ENCODE measurements at regions of chr1 and their contacts with region 1.

Region 1: GRCh38 chr1:217911908-217912307 is 280.8 kb downstream of the SPATA17 start:
- DNase-seq: no peak
- ATAC-seq: no peak
- H3K4me3 ChIP-seq: no peak overlapping the region
- H3K27ac ChIP-seq: no peak overlapping the region
- H3K4me1 ChIP-seq: no peaks in the 10 kb centered on the region
- H3K27me3 ChIP-seq: peaks cover 0 to 5% (median 0%) of the 10 kb centered on the region in 7 donors
- CTCF ChIP-seq: no peak

Region 2: GRCh38 chr1:217703326-217703725 is 208.6 kb before region 1 on chr1:
- intact Hi-C with region 1: no loop called
- DNase-seq: no peak
- ATAC-seq: no peak
- H3K4me3 ChIP-seq: no peak overlapping the region
- H3K27ac ChIP-seq: no peak overlapping the region
- H3K4me1 ChIP-seq: no peaks in the 10 kb centered on the region
- H3K27me3 ChIP-seq: no peaks in the 10 kb centered on the region
- CTCF ChIP-seq: no peak

Region 3: GRCh38 chr1:217977943-217978342 is 66.0 kb after region 1 on chr1:
- intact Hi-C with region 1: loop called in 1 of 10 experiments (anchors 10 kb)
- DNase-seq: no peak
- ATAC-seq: no peak
- H3K4me3 ChIP-seq: no peak overlapping the region
- H3K27ac ChIP-seq: no peak overlapping the region
- H3K4me1 ChIP-seq: no peaks in the 10 kb centered on the region
- H3K27me3 ChIP-seq: no peaks in the 10 kb centered on the region
- CTCF ChIP-seq: no peak